Heart right ventricle (tissue), 16 donors: ENCODE measurements at regions of chr10 and their contacts with region 1.

Region 1: GRCh38 chr10:33279811-33280602 is 54.5 kb downstream of the NRP1 start:
- DNase-seq: no peak
- ATAC-seq: peak in 2 of 8 donors; percentile 13 to 21
- H3K4me3 ChIP-seq: no peak overlapping the region
- H3K27ac ChIP-seq: peak overlapping the region in 7 of 10 donors; percentile 7 to 99 (median 52)
- H3K4me1 ChIP-seq: peaks cover 13 to 98% (median 76%) of the 10 kb centered on the region in 9 donors
- H3K27me3 ChIP-seq: no peaks in the 10 kb centered on the region
- CTCF ChIP-seq: no peak

Region 2: DNA sequence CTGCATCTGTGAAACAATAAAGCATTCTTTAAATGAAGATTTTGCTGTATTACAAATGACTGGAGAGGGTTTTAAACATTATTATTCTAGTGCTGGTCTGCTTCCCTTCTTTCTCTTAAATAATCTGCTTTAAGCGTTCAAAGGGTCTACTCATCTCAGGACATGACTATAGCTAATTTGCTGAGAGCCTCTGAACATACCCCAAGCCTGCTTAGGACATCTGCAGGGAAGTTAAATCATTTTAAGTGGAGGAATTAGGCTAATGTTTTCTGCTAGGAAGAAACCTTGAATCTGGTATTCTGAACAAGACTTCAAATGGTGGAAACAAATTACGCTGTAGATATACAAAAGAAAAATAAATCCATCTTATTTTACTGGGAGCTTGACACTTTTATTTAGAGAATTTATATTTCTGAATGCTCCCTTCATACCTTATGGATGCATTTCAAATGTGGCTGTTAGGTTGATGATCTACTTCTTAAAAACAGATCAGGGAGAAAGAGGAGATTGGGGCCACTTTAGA is 197.6 kb before region 1 on chr10:
- intact Hi-C with region 1: no loop called
- DNase-seq: no peak
- ATAC-seq: no peak
- H3K4me3 ChIP-seq: no peak overlapping the region
- H3K27ac ChIP-seq: no peak overlapping the region
- H3K4me1 ChIP-seq: peaks cover 0 to 10% (median 0%) of the 10 kb centered on the region in 9 donors
- H3K27me3 ChIP-seq: peaks cover 0 to 31% (median 0%) of the 10 kb centered on the region in 7 donors
- CTCF ChIP-seq: no peak

Region 3: DNA sequence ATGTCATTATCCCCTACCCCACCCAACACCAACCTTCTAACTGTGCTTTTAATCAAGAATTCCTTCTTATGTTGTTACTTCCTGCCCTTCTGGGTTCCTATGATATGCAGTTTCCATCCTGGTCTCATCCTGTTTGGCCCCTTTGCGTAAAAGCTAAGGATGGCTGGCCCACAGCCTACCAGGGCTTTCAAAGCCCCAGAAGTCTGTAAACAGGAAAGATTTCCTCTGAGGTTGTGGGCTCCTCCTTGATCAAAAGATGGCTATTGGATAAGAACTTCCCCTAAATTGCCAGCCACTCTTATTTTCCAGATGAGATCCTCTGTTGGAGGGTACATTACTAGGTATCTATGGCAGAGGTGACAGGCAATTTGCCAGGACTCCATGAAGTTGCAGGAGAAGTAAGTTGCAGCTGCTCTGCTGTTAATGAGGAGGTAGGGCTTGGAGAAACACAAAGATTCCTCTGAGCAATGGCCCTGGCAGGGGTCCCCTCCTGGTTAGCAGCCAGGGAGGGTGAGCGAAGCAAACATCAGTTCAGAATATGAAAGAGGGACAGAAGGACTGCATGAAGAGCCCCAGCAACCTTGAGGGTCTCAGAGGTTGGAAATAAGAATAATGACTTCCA is 22.3 kb after region 1 on chr10:
- intact Hi-C with region 1: no loop called
- DNase-seq: peak in 1 of 2 donors; percentile 49
- ATAC-seq: peak; percentile 38 to 81 (median 62)
- H3K4me3 ChIP-seq: no peak overlapping the region
- H3K27ac ChIP-seq: peak overlapping the region in 9 of 10 donors; percentile 50 to 99 (median 63)
- H3K4me1 ChIP-seq: peaks cover 32 to 100% (median 100%) of the 10 kb centered on the region in 9 donors
- H3K27me3 ChIP-seq: no peaks in the 10 kb centered on the region
- CTCF ChIP-seq: no peak

Region 4: GRCh38 chr10:33314811-33315561 is 35.0 kb after region 1 on chr10:
- intact Hi-C with region 1: loop called in 1 of 10 experiments (anchors 5 kb)
- DNase-seq: no peak
- ATAC-seq: no peak
- H3K4me3 ChIP-seq: no peak overlapping the region
- H3K27ac ChIP-seq: peak overlapping the region in 6 of 10 donors; percentile 35 to 99 (median 52)
- H3K4me1 ChIP-seq: peaks cover 37 to 100% (median 90%) of the 10 kb centered on the region in 9 donors
- H3K27me3 ChIP-seq: no peaks in the 10 kb centered on the region
- CTCF ChIP-seq: no peak

Region 5: DNA sequence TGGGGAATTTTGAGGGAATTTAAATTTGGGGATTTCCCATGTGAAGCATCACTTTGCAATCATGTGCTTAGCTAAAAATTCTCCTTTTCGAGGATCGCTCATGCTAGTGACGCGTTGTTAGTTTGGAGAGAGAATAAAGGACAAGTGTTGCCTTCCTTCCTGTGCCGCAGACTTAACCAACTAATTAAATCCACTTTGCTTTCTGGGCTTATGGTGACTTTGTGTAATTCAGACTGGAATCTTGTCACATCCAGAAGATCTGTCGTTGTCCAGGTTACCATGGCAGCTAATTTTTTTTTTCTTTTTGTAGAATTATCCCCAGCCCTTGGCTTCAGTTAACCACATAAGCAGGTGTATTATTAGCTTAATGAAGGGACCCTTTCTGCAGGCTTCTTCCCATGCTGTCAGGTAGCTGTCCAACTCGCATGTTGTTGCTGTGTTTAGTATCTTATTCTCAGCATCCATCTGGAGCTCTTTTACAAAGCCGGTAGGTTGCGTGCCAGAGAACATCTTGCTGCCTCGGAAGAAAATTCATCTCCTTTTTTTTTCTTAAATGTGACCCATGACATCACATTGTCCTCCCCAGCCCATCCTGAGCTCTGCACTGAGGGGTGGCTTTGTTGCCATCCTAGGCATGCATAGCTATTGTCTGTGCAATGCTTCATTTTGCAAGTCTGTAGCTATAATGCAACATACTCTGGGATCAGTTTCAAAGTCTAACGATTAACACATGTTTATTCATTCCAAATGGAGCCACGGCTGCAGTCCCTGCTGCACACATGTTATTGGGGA is 101.6 kb after region 1 on chr10:
- intact Hi-C with region 1: no loop called
- DNase-seq: no peak
- ATAC-seq: peak in 1 of 8 donors; percentile 62
- H3K4me3 ChIP-seq: no peak overlapping the region
- H3K27ac ChIP-seq: no peak overlapping the region
- H3K4me1 ChIP-seq: peaks cover 0 to 16% (median 7%) of the 10 kb centered on the region in 9 donors
- H3K27me3 ChIP-seq: no peaks in the 10 kb centered on the region
- CTCF ChIP-seq: no peak